ENCODE measurements at regions of chr1 and their contacts with region 1.

Region 1: GRCh38 chr1:247487057-247487456 is 29.2 kb upstream of the OR2B11 start:
- DNase-seq: peak; percentile 26
- ATAC-seq: peak; percentile 91
- H3K4me3 ChIP-seq: no peak overlapping the region
- H3K27ac ChIP-seq: no peak overlapping the region
- H3K4me1 ChIP-seq: no peaks in the 10 kb centered on the region
- H3K27me3 ChIP-seq: peaks cover 14% of the 10 kb centered on the region; the same call in 1 of the 2 replicates
- CTCF ChIP-seq: peak; percentile 45 to 51 (median 50); a peak in 5 of 6 replicates
- POLR2A ChIP-seq: no peak
- RAD21 ChIP-seq: peak; percentile 77

Region 2: GRCh38 chr1:246497331-246497915 is 989.6 kb before region 1 on chr1:
- CTCF ChIA-PET with region 1: no interaction called
- POLR2A ChIA-PET with region 1: no interaction called
- RAD21 ChIA-PET with region 1: no interaction called
- intact Hi-C with region 1: loop called (anchors 2 kb)
- DNase-seq: peak; percentile 60
- ATAC-seq: peak; percentile 65
- H3K4me3 ChIP-seq: no peak overlapping the region
- H3K27ac ChIP-seq: no peak overlapping the region
- H3K4me1 ChIP-seq: peaks cover 0 to 3% of the 10 kb centered on the region in 2 experiments; a peak in 2 of 4 replicates
- H3K27me3 ChIP-seq: no peaks in the 10 kb centered on the region
- CTCF ChIP-seq: peak; percentile 57 to 77 (median 77); a peak in 5 of 6 replicates
- POLR2A ChIP-seq: no peak
- RAD21 ChIP-seq: peak; percentile 77

Region 3: GRCh38 chr1:247373721-247374141 is 113.3 kb before region 1 on chr1:
- CTCF ChIA-PET with region 1: interaction called, 8 read pairs
- POLR2A ChIA-PET with region 1: no interaction called
- RAD21 ChIA-PET with region 1: no interaction called
- intact Hi-C with region 1: loop called (anchors 1 kb)
- DNase-seq: no peak
- ATAC-seq: peak; percentile 52
- H3K4me3 ChIP-seq: no peak overlapping the region
- H3K27ac ChIP-seq: no peak overlapping the region
- H3K4me1 ChIP-seq: no peaks in the 10 kb centered on the region; a peak in 1 of 4 replicates
- H3K27me3 ChIP-seq: no peaks in the 10 kb centered on the region
- CTCF ChIP-seq: peak in 2 of 3 experiments; percentile 44 to 47; a peak in 4 of 6 replicates
- POLR2A ChIP-seq: no peak
- RAD21 ChIP-seq: no peak

Region 4: GRCh38 chr1:247506831-247507230 is 19.8 kb after region 1 on chr1:
- CTCF ChIA-PET with region 1: no interaction called
- POLR2A ChIA-PET with region 1: no interaction called
- RAD21 ChIA-PET with region 1: no interaction called
- intact Hi-C with region 1: no loop called
- DNase-seq: no peak
- ATAC-seq: no peak
- H3K4me3 ChIP-seq: no peak overlapping the region
- H3K27ac ChIP-seq: no peak overlapping the region
- H3K4me1 ChIP-seq: no peaks in the 10 kb centered on the region
- H3K27me3 ChIP-seq: no peaks in the 10 kb centered on the region
- CTCF ChIP-seq: no peak
- POLR2A ChIP-seq: no peak
- RAD21 ChIP-seq: no peak

Region 5: GRCh38 chr1:247542811-247543210 is 55.8 kb after region 1 on chr1:
- CTCF ChIA-PET with region 1: no interaction called
- POLR2A ChIA-PET with region 1: no interaction called
- RAD21 ChIA-PET with region 1: no interaction called
- intact Hi-C with region 1: no loop called
- DNase-seq: no peak
- ATAC-seq: no peak
- H3K4me3 ChIP-seq: no peak overlapping the region
- H3K27ac ChIP-seq: no peak overlapping the region
- H3K4me1 ChIP-seq: no peaks in the 10 kb centered on the region
- H3K27me3 ChIP-seq: no peaks in the 10 kb centered on the region
- CTCF ChIP-seq: no peak
- POLR2A ChIP-seq: no peak
- RAD21 ChIP-seq: no peak

Measured in HCT116 (cell line).